Sigmoid colon (tissue), 7 donors: ENCODE measurements at regions of chr16 and their contacts with region 1.

Region 1: GRCh38 chr16:30844671-30845449 is 49.0 kb downstream of the BCL7C start:
- DNase-seq: peak; percentile 82
- H3K4me3 ChIP-seq: peak overlapping the region in 3 of 4 donors; percentile 24 to 33 (median 30)
- H3K27ac ChIP-seq: peak overlapping the region; percentile 46 to 75 (median 70)
- H3K4me1 ChIP-seq: peaks cover 0 to 10% (median 8%) of the 10 kb centered on the region in 4 donors
- H3K27me3 ChIP-seq: no peaks in the 10 kb centered on the region
- CTCF ChIP-seq: peak; percentile 82 to 94 (median 90)
- EP300 ChIP-seq: no peak
- POLR2A ChIP-seq: no peak

Region 2: GRCh38 chr16:30797670-30798309 is 47.1 kb before region 1 on chr16:
- intact Hi-C with region 1: no loop called
- DNase-seq: no peak
- H3K4me3 ChIP-seq: no peak overlapping the region
- H3K27ac ChIP-seq: no peak overlapping the region
- H3K4me1 ChIP-seq: no peaks in the 10 kb centered on the region
- H3K27me3 ChIP-seq: no peaks in the 10 kb centered on the region
- CTCF ChIP-seq: no peak
- EP300 ChIP-seq: no peak
- POLR2A ChIP-seq: no peak

Region 3: DNA sequence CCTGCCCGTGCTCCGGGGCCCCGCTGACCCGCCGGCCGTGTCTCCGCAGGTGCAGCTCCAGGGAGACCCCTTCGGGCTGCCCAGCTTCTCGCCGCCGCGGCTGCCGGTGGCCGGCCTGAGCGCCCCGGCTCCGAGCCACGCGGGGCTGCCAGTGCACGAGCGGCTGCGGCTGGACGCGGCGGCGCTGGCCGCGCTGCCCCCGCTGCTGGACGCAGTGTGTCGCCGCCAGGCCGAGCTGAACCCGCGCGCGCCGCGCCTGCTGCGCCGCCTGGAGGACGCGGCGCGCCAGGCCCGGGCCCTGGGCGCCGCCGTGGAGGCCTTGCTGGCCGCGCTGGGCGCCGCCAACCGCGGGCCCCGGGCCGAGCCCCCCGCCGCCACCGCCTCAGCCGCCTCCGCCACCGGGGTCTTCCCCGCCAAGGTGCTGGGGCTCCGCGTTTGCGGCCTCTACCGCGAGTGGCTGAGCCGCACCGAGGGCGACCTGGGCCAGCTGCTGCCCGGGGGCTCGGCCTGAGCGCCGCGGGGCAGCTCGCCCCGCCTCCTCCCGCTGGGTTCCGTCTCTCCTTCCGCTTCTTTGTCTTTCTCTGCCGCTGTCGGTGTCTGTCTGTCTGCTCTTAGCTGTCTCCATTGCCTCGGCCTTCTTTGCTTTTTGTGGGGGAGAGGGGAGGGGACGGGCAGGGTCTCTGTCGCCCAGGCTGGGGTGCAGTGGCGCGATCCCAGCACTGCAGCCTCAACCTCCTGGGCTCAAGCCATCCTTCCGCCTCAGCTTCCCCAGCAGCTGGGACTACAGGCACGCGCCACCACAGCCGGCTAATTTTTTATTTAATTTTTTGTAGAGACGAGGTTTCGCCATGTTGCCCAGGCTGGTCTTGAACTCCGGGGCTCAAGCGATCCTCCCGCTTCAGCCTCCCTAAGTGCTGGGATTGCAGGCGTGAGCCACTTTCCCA is 57.4 kb after region 1 on chr16:
- intact Hi-C with region 1: loop called (anchors 1 kb)
- DNase-seq: peak; percentile 81
- H3K4me3 ChIP-seq: peak overlapping the region; percentile 36 to 65 (median 60)
- H3K27ac ChIP-seq: peak overlapping the region; percentile 89 to 92 (median 91)
- H3K4me1 ChIP-seq: peaks cover 0 to 27% (median 21%) of the 10 kb centered on the region in 4 donors
- H3K27me3 ChIP-seq: no peaks in the 10 kb centered on the region
- CTCF ChIP-seq: peak in 2 of 4 experiments; percentile 17 to 43
- EP300 ChIP-seq: no peak
- POLR2A ChIP-seq: no peak